Activated T-helper 1 cell treated with anti-CD3 and anti-CD28 coated beads, Interleukin-12 subunit alpha, Interleukin-12 subunit beta, Interleukin-2, Interleukin-4 antibody, amounts not matched to agents 30 ng/mL and 10 ng/mL and 1 ng/mL, durations not matched to agents 14 hours and 24 hours and 36 hours (primary cell): ENCODE measurements at regions of chr7 and their contacts with region 1.

Region 1: GRCh38 chr7:131040467-131040932 is 287.2 kb upstream of the MKLN1 start:
- DNase-seq: peak; percentile 34
- H3K4me3 Mint-ChIP-seq: no peak overlapping the region
- H3K27ac Mint-ChIP-seq: no peak overlapping the region
- H3K4me1 Mint-ChIP-seq: peaks cover 24% of the 10 kb centered on the region
- H3K27me3 Mint-ChIP-seq: no peaks in the 10 kb centered on the region

Region 2: DNA sequence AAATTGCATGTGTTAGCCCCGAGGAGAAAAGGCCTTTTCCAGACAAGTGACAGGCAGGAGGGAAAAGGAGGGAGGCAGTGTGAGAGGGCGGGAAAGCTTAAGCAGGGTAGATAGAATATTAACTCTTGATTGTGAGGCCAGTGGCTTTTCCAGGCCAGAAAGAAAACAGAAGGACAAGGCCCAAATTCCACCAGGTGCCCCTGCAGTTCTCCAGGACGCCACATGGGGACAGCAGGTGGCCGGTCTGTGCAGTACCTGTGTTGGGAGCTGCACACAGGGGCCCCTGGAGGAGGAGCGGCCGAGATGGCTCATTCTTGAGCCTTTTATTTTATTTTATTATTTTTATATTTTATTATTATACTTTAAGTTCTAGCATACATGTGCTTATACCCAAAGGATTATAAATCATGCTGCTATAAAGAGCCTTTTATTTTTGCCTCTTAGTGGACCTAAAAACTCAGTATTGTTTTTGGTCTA is 165.2 kb before region 1 on chr7:
- intact Hi-C with region 1: loop called (anchors 1 kb)
- DNase-seq: peak; percentile 20
- H3K4me3 Mint-ChIP-seq: no peak overlapping the region
- H3K27ac Mint-ChIP-seq: peak overlapping the region; percentile 45
- H3K4me1 Mint-ChIP-seq: peaks cover 22% of the 10 kb centered on the region
- H3K27me3 Mint-ChIP-seq: no peaks in the 10 kb centered on the region

Region 3: DNA sequence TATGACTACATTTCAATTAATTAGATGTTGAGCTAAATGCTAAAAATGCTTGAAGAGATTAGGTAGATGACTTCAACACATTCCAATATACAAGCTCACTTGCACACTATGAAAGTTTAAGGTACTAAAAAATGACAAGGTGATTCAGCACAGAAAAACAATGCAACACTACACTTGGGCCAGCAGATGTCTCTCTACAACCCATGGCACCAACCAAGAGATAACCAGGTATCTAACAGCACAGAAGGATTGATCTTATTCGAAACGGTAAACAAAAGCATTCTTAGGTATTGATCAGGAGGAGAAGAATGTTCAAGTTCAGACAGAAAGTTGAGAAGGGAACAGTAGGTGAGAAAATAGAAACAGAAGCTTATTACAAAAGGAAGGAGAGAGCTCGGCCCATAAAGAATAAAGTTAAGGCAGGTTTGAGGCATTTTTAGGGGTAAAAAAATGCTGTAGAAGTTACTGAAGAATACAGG is 58.3 kb before region 1 on chr7:
- intact Hi-C with region 1: loop called (anchors 1 kb)
- DNase-seq: no peak
- H3K4me3 Mint-ChIP-seq: no peak overlapping the region
- H3K27ac Mint-ChIP-seq: no peak overlapping the region
- H3K4me1 Mint-ChIP-seq: peaks cover 21% of the 10 kb centered on the region
- H3K27me3 Mint-ChIP-seq: no peaks in the 10 kb centered on the region

Region 4: DNA sequence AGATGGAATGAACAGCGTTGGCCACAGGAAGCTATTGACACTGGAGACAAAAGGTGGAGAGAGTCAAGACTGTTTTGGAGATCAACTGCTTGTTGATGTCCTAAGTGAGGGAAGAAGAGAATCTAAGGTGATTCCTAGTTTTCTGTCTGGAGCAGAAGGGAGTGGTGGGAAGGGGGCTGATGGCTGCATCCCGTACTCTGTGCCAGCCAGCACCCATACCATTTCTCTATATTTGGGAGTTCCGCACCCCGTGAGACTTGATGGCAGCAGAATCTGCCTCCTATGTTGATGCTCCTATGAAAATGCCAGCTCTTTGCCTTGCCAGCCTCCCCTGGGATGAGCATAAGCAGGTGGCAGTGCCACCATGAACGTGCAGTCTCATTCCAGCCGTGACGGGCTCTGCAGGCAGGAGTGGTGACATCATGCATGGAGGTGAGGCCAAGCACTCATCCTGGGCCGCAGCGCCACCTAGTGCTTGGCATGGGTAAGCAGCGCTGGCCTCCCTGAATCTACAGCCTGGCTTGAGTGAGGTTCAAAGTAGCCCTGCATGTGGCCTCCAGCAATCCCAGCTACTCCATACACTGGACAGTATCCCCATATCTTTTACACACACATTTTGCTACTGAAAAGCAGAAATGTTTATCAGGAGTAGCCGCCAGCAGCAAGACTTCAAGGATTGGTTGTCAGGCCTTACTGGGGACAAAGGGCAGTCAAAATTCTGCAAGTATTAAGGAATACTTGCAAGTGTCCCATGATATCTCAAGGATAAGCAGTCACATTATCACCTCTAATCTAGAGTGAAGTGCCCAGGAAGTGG is 473.0 kb after region 1 on chr7:
- intact Hi-C with region 1: loop called (anchors 1 kb)
- DNase-seq: peak; percentile 71
- H3K4me3 Mint-ChIP-seq: no peak overlapping the region
- H3K27ac Mint-ChIP-seq: peak overlapping the region; percentile 25
- H3K4me1 Mint-ChIP-seq: peaks cover 23% of the 10 kb centered on the region
- H3K27me3 Mint-ChIP-seq: peaks cover 12% of the 10 kb centered on the region